IMR-90 (cell line): ENCODE measurements at regions of chr19 and their contacts with region 1.

Region 1: DNA sequence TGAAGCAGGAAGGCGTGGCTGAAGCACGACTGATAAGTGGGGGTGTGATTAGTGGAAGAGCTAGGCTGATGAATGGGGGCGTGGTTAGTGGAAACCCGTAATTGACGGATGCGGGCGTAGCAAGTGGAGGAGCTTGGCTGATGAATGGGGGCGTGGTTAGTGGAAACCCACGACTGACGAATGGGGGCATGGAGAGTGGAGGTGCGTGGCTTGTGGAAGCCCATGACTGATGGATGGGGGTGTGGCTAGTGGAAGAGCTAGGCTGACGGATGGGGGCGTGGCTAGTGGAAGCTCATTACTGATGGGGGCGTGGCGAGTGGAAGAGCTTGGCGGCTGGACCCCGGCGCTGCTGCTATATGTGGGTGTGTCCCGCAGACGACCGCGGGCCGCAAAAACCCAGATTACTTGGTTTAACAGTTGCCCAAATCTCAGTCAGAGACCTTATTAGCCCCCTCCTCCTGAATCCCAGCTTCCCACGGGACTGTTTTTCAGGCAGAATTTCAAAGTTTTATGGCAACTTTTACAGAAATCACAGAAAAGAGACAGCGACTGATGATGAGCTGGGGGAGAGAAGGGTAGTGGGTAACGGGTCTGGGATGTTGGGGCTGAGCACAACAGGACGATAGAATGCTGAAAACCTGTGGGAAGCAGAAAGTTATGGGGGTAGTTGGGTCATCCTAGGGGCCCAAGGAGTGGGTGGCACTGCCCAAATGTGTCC is 9.0 kb upstream of the MEIS3 start:
- DNase-seq: peak; percentile 98
- ATAC-seq: peak; percentile 94
- H3K4me3 ChIP-seq: peak overlapping the region; percentile 12; the same call in 1 of the 2 replicates
- H3K27ac ChIP-seq: no peak overlapping the region
- H3K4me1 ChIP-seq: peaks cover 3% of the 10 kb centered on the region; the same call in 1 of the 2 replicates
- H3K27me3 ChIP-seq: peaks cover 10% of the 10 kb centered on the region; the same call in 1 of the 2 replicates
- CTCF ChIP-seq: no peak
- POLR2A ChIP-seq: no peak
- RAD21 ChIP-seq: no peak

Region 2: GRCh38 chr19:47284324-47284899 is 143.9 kb before region 1 on chr19:
- CTCF ChIA-PET with region 1: no interaction called
- POLR2A ChIA-PET with region 1: no interaction called
- dilution Hi-C with region 1: no loop called
- in situ Hi-C with region 1: no loop called
- intact Hi-C with region 1: loop called (anchors 1 kb)
- DNase-seq: peak; percentile 68
- ATAC-seq: peak; percentile 67
- H3K4me3 ChIP-seq: no peak overlapping the region
- H3K27ac ChIP-seq: no peak overlapping the region
- H3K4me1 ChIP-seq: no peaks in the 10 kb centered on the region
- H3K27me3 ChIP-seq: no peaks in the 10 kb centered on the region
- CTCF ChIP-seq: peak; percentile 82
- POLR2A ChIP-seq: no peak
- RAD21 ChIP-seq: peak; percentile 61

Region 3: GRCh38 chr19:47296036-47296435 is 132.3 kb before region 1 on chr19:
- CTCF ChIA-PET with region 1: interaction called, 4 read pairs
- POLR2A ChIA-PET with region 1: no interaction called
- dilution Hi-C with region 1: no loop called
- in situ Hi-C with region 1: no loop called
- intact Hi-C with region 1: loop called (anchors 1 kb)
- DNase-seq: peak; percentile 74
- ATAC-seq: peak; percentile 97
- H3K4me3 ChIP-seq: no peak overlapping the region
- H3K27ac ChIP-seq: no peak overlapping the region
- H3K4me1 ChIP-seq: no peaks in the 10 kb centered on the region
- H3K27me3 ChIP-seq: no peaks in the 10 kb centered on the region
- CTCF ChIP-seq: peak; percentile 84
- POLR2A ChIP-seq: no peak
- RAD21 ChIP-seq: peak; percentile 90

Region 4: DNA sequence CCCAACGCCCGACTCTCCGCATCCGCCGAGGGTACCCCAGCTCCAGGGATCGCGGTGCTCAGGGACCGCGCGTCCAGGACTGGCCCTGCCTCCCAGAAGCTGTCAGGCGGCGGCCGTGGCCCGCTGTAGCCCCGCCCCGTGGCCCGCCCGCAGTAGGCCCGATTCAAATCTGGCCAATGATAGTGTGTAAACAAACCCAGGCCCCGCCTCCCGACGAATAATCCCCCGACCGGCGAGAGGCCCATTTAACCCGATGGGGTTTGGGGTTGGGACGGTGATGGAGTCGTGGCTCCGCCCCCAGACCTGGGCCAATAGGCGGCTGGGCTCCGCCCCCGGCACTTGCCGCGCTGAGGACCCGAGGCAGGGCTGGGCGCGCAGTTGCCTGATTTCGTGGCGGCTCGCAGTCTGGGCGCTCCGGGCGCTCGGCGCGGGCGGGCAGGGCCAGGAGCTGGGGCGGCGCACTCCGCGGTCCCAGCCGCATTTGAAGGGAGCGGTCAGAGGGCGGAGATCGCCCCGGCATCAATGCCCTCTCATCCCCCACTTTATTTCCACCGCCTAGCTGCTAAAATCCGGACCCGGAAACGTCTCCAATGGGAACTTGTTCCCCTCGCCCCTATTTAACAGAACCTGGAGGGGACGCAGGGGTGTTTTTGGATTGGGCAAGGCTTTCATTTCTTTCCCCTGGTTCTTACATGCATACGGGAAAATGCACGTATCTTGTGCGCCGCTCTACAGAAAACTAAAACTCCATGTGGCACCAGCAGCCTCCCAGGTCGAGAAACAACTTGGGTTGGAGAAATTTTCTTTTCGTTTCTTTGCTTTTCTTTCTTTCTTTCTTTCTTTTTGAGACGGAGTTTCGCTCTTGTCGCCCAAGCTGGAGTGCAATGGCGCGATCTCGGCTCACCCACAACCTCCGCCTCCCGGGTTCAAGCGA is 172.2 kb after region 1 on chr19:
- CTCF ChIA-PET with region 1: no interaction called
- POLR2A ChIA-PET with region 1: no interaction called
- dilution Hi-C with region 1: no loop called
- in situ Hi-C with region 1: no loop called
- intact Hi-C with region 1: loop called (anchors 5 kb)
- DNase-seq: peak; percentile 98
- ATAC-seq: peak; percentile 95
- H3K4me3 ChIP-seq: peak overlapping the region; percentile 59
- H3K27ac ChIP-seq: peak overlapping the region; percentile 83
- H3K4me1 ChIP-seq: peaks cover 3% of the 10 kb centered on the region; the same call in 1 of the 2 replicates
- H3K27me3 ChIP-seq: no peaks in the 10 kb centered on the region
- CTCF ChIP-seq: no peak
- POLR2A ChIP-seq: peak; percentile 86
- RAD21 ChIP-seq: no peak; the same call in none of the 2 replicates